Gastrocnemius medialis (tissue), 4 donors: ENCODE measurements at regions of chr2 and their contacts with region 1.

Region 1: GRCh38 chr2:121071034-121071504 is 213.9 kb downstream of the TFCP2L1 start:
- DNase-seq: peak; percentile 32 to 40
- ATAC-seq: peak; percentile 24 to 64
- H3K4me3 ChIP-seq: no peak overlapping the region
- H3K27ac ChIP-seq: no peak overlapping the region
- H3K4me1 ChIP-seq: no peaks in the 10 kb centered on the region
- H3K27me3 ChIP-seq: peaks cover 7 to 16% (median 11%) of the 10 kb centered on the region in 3 donors
- CTCF ChIP-seq: peak; percentile 72 to 97 (median 93)
- POLR2A ChIP-seq: no peak

Region 2: GRCh38 chr2:120441744-120442471 is 629.2 kb before region 1 on chr2:
- in situ Hi-C with region 1: no loop called
- intact Hi-C with region 1: no loop called
- DNase-seq: no peak
- ATAC-seq: peak; percentile 31 to 35
- H3K4me3 ChIP-seq: peak overlapping the region; percentile 44 to 67 (median 48)
- H3K27ac ChIP-seq: peak overlapping the region in 1 of 4 donors; percentile 4
- H3K4me1 ChIP-seq: peaks cover 6 to 9% of the 10 kb centered on the region in 2 donors
- H3K27me3 ChIP-seq: peaks cover 14 to 28% (median 15%) of the 10 kb centered on the region in 3 donors
- CTCF ChIP-seq: no peak
- POLR2A ChIP-seq: no peak

Region 3: GRCh38 chr2:120699292-120699691 is 371.8 kb before region 1 on chr2:
- in situ Hi-C with region 1: loop called in 3 of 4 experiments (anchors 5 kb)
- intact Hi-C with region 1: no loop called
- DNase-seq: no peak
- ATAC-seq: no peak
- H3K4me3 ChIP-seq: no peak overlapping the region
- H3K27ac ChIP-seq: no peak overlapping the region
- H3K4me1 ChIP-seq: no peaks in the 10 kb centered on the region
- H3K27me3 ChIP-seq: peaks cover 0 to 8% (median 8%) of the 10 kb centered on the region in 3 donors
- CTCF ChIP-seq: no peak
- POLR2A ChIP-seq: no peak

Region 4: GRCh38 chr2:120879431-120880295 is 191.4 kb before region 1 on chr2:
- in situ Hi-C with region 1: no loop called
- intact Hi-C with region 1: loop called (anchors 1 kb)
- DNase-seq: peak in 1 of 2 donors; percentile 61
- ATAC-seq: peak; percentile 53 to 66
- H3K4me3 ChIP-seq: peak overlapping the region in 1 of 4 donors; percentile 9
- H3K27ac ChIP-seq: peak overlapping the region in 3 of 4 donors; percentile 5 to 65 (median 20)
- H3K4me1 ChIP-seq: peaks cover 33 to 37% of the 10 kb centered on the region in 2 donors
- H3K27me3 ChIP-seq: no peaks in the 10 kb centered on the region
- CTCF ChIP-seq: peak in 3 of 5 experiments; percentile 28 to 53 (median 41)
- POLR2A ChIP-seq: no peak

Region 5: DNA sequence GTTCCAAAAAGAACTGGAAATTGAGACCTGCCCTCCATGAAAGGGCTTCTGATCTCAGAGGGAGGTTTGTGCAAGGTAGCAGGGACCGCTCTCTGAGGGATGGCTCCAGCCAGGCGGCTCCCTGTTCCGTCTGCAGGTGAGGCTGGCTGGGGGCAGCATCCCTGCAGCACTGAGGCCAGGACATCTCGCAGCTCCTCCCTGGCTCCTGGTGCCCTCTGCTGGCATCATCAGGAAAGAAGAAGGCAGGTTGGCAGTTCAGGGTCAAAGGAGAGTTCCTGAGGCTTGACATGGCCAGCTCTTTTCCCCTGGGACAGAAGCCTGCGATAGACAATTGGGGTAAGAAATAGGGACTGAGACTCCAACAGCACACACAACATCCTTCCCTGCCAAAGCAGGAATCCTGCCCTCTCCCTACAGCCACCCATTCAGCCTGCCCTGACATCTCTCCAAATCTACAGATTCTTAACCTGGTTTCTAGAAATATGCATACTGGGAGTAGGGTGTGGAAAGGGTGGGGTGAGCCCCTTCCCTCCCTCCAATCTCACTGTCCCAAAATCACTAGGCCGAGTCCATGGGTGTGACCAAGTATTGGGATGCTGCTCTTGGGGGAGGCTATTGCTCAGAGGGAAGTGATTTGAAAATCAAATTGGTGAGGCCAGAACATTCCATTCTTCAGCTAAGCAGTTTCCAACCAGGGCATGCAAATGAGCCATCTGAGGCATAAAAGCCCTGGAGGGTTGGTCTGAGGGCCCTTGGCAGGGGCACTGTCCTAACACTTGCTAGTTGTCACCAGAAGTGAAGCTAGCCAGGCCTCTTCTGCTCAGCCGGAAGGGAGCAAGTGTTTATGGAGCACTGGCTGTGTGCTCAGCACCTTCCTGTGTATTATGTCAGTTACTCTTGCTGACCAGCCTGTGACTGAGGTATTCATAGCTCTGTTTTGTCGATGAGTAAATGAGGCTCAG is 28.5 kb after region 1 on chr2:
- in situ Hi-C with region 1: no loop called
- intact Hi-C with region 1: no loop called
- DNase-seq: no peak
- ATAC-seq: no peak
- H3K4me3 ChIP-seq: no peak overlapping the region
- H3K27ac ChIP-seq: no peak overlapping the region
- H3K4me1 ChIP-seq: no peaks in the 10 kb centered on the region
- H3K27me3 ChIP-seq: no peaks in the 10 kb centered on the region
- CTCF ChIP-seq: no peak
- POLR2A ChIP-seq: no peak

Region 6: DNA sequence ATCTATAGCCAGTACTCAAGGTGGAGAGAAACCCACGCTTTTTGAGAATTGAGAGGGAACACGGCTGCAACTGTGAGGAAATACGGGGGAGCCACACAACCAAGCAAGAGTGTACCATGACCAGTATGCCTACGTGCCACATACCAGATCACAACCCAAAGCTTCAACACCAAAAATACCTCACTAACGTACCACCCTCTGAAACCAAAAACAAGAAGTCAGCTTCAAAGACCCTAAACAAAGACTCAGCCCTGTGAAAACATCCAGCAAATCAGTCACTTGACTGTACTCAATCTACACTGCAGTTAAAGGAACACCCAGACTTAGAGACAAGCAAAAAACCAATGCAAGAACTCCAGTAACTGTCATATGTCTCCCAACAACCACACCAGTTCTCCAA is 476.6 kb after region 1 on chr2:
- in situ Hi-C with region 1: no loop called
- intact Hi-C with region 1: no loop called
- DNase-seq: no peak
- ATAC-seq: no peak
- H3K4me3 ChIP-seq: no peak overlapping the region
- H3K27ac ChIP-seq: peak overlapping the region in 3 of 4 donors; percentile 36 to 72 (median 60)
- H3K4me1 ChIP-seq: peaks cover 72 to 78% of the 10 kb centered on the region in 2 donors
- H3K27me3 ChIP-seq: no peaks in the 10 kb centered on the region
- CTCF ChIP-seq: no peak
- POLR2A ChIP-seq: no peak